K562 (cell line): ENCODE measurements at regions of chr10 and their contacts with region 1.

Region 1: GRCh38 chr10:95601116-95601719 is 40.0 kb upstream of the SORBS1 start:
- DNase-seq: peak; percentile 74 to 87 (median 77)
- ATAC-seq: peak; percentile 96
- H3K4me3 ChIP-seq: no peak overlapping the region
- H3K27ac ChIP-seq: no peak overlapping the region
- H3K4me1 ChIP-seq: no peaks in the 10 kb centered on the region
- H3K27me3 ChIP-seq: no peaks in the 10 kb centered on the region
- CTCF ChIP-seq: peak; percentile 93 to 99 (median 98)
- EP300 ChIP-seq: no peak
- POLR2A ChIP-seq: no peak
- RAD21 ChIP-seq: peak; percentile 97 to 98

Region 2: DNA sequence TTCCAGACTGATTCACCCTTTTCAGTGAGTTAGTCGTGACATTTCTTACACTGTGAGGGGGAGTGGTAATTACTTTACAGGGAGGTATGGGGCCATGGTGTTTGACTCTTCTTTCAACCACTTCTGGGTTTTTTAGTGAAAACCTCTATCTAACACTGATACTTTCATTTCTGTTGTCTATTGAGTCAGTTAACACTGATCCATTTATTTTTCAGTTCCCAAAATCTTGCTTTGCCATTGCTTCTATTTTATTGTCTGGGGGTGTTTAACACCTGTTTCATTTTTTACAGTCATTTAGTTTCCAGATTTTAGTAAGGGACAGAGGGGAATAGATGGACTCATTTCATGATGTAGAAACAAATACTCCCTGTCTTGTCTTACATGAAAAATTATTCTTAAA is 994.1 kb before region 1 on chr10:
- CTCF ChIA-PET with region 1: no interaction called
- POLR2A ChIA-PET with region 1: no interaction called
- in situ Hi-C with region 1: loop called (anchors 25 kb)
- intact Hi-C with region 1: no loop called
- DNase-seq: no peak
- ATAC-seq: no peak
- H3K4me3 ChIP-seq: no peak overlapping the region
- H3K27ac ChIP-seq: no peak overlapping the region
- H3K4me1 ChIP-seq: no peaks in the 10 kb centered on the region
- H3K27me3 ChIP-seq: no peaks in the 10 kb centered on the region
- CTCF ChIP-seq: no peak
- EP300 ChIP-seq: no peak
- POLR2A ChIP-seq: no peak
- RAD21 ChIP-seq: no peak

Region 3: GRCh38 chr10:95133016-95133752 is 468.0 kb before region 1 on chr10:
- CTCF ChIA-PET with region 1: interaction called, 4 read pairs
- POLR2A ChIA-PET with region 1: no interaction called
- in situ Hi-C with region 1: loop called (anchors 25 kb)
- intact Hi-C with region 1: no loop called
- DNase-seq: peak; percentile 57 to 86 (median 60)
- ATAC-seq: peak; percentile 93
- H3K4me3 ChIP-seq: no peak overlapping the region
- H3K27ac ChIP-seq: no peak overlapping the region
- H3K4me1 ChIP-seq: no peaks in the 10 kb centered on the region
- H3K27me3 ChIP-seq: no peaks in the 10 kb centered on the region
- CTCF ChIP-seq: peak; percentile 71 to 86 (median 76)
- EP300 ChIP-seq: no peak
- POLR2A ChIP-seq: no peak
- RAD21 ChIP-seq: peak; percentile 69 to 88

Region 4: DNA sequence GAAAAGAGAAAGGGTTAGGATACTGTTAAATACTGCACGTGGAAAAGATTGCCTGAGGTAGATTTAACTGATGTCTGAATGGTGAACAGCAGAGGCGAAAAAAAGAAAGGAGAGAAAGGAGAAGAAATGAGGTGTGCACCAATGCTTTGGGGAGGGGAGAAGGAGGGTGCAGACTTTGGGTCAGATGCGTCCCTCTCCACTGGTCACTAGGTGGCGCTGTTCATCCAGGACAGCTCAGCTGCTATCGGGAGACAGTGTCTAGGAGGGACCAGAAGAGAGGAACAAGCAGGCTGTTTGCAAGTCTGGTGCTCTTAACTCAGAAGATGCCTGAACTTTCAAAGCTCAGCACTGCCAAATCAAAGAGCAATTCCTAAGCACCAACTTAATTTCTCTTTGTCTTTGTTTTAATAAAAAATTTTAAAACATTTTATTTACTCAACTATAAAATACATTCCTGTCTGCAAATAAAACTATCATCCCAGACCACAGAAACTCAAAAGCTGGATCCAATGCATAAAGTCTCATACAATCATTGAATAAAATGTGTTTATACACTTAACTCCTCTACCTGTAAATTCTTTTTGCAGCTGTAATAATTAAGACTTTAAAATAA is 226.5 kb before region 1 on chr10:
- CTCF ChIA-PET with region 1: interaction called, 36 read pairs
- POLR2A ChIA-PET with region 1: interaction called, 10 read pairs
- in situ Hi-C with region 1: loop called (anchors 5 kb)
- intact Hi-C with region 1: loop called (anchors 1 kb)
- DNase-seq: peak; percentile 79 to 86 (median 83)
- ATAC-seq: peak; percentile 99
- H3K4me3 ChIP-seq: no peak overlapping the region
- H3K27ac ChIP-seq: no peak overlapping the region
- H3K4me1 ChIP-seq: no peaks in the 10 kb centered on the region; a peak in 1 of 5 replicates
- H3K27me3 ChIP-seq: no peaks in the 10 kb centered on the region
- CTCF ChIP-seq: peak; percentile 87 to 88 (median 87)
- EP300 ChIP-seq: no peak
- POLR2A ChIP-seq: no peak
- RAD21 ChIP-seq: peak; percentile 87 to 96

Region 5: GRCh38 chr10:95414844-95415485 is 186.3 kb before region 1 on chr10:
- CTCF ChIA-PET with region 1: no interaction called
- POLR2A ChIA-PET with region 1: no interaction called
- in situ Hi-C with region 1: no loop called
- intact Hi-C with region 1: no loop called
- DNase-seq: no peak
- ATAC-seq: no peak
- H3K4me3 ChIP-seq: no peak overlapping the region
- H3K27ac ChIP-seq: no peak overlapping the region
- H3K4me1 ChIP-seq: peaks cover 0 to 4% of the 10 kb centered on the region in 2 experiments; a peak in 2 of 5 replicates
- H3K27me3 ChIP-seq: no peaks in the 10 kb centered on the region
- CTCF ChIP-seq: no peak
- EP300 ChIP-seq: no peak
- POLR2A ChIP-seq: no peak
- RAD21 ChIP-seq: no peak

Region 6: GRCh38 chr10:95430231-95430951 is 170.8 kb before region 1 on chr10:
- CTCF ChIA-PET with region 1: interaction called, 62 read pairs
- POLR2A ChIA-PET with region 1: interaction called, 4 read pairs
- in situ Hi-C with region 1: loop called (anchors 5 kb)
- intact Hi-C with region 1: loop called (anchors 1 kb)
- DNase-seq: peak; percentile 67 to 71 (median 70)
- ATAC-seq: peak; percentile 91
- H3K4me3 ChIP-seq: no peak overlapping the region
- H3K27ac ChIP-seq: no peak overlapping the region
- H3K4me1 ChIP-seq: peaks cover 0 to 16% of the 10 kb centered on the region in 2 experiments; a peak in 4 of 5 replicates
- H3K27me3 ChIP-seq: no peaks in the 10 kb centered on the region
- CTCF ChIP-seq: peak; percentile 86 to 94 (median 88)
- EP300 ChIP-seq: no peak
- POLR2A ChIP-seq: no peak
- RAD21 ChIP-seq: peak; percentile 82 to 91